ENCODE measurements at regions of chrX and their contacts with region 1.

Region 1: GRCh38 chrX:101799387-101799786 is 132.4 kb downstream of the ZMAT1 start:
- DNase-seq: peak; percentile 80
- ATAC-seq: peak; percentile 100

Region 2: DNA sequence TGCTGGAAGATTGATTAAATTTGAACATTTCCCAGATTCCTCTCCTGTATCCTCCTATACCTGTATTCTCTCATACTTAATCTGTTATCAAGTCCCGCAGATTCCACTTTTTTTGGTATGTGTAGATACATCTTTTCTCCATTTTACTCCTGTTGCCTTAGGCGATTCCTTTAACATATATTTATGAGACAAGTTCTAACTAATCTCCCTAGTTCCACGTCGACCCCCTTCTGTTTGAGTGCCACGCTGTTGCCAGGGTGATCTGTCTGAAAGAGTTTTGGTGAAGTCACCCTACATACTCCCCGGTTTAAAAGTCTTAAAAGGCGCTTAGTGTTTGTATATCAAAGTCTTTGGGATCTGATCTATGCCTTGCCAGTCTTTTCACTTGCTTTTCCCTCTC is 388.9 kb before region 1 on chrX:
- intact Hi-C with region 1: loop called (anchors 5 kb)
- DNase-seq: no peak
- ATAC-seq: no peak

Region 3: DNA sequence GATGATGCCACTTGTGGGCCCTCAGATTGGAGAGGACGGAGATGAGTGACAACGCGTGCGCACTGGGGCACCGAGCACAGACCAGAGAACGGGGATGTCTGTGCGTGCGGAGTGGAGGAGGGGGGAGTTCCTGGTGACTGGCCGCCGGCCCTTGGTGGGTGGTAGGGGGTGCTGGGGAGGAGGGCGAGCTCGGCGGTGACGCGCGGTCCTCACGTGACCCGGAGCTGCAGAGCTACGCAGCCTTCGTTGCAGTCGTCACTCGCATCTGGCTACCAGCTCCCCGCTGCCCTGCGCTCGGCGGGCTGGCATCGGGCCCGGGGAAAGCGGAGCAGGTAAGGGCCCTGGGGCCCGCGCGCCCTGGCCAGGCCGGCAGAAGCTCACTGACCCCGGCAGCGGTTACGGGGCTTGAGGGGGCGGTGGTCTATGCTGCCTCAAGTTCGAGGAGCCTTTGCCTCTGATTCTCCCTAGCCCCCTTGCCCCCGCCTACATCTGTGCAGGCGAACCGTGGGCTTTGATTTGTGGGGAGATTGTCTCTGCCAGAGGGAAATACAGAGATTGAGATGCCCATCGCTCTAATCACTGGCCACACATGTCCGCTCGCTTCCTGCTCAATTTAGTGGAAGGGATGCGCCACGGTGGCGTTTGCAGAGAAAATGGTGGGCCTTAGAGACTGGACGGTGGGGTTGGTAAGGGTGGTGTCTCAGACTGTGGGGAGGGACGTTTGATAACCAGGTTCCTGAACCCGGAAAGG is 314.0 kb before region 1 on chrX and contains the start of gene ARMCX4:
- intact Hi-C with region 1: no loop called
- DNase-seq: peak; percentile 59
- ATAC-seq: peak; percentile 88
- total RNA-seq, gene ARMCX4: 5.5 TPM

Region 4: GRCh38 chrX:101595739-101596419 is 203.5 kb before region 1 on chrX:
- intact Hi-C with region 1: loop called (anchors 5 kb)
- DNase-seq: no peak
- ATAC-seq: peak; percentile 63

Region 5: DNA sequence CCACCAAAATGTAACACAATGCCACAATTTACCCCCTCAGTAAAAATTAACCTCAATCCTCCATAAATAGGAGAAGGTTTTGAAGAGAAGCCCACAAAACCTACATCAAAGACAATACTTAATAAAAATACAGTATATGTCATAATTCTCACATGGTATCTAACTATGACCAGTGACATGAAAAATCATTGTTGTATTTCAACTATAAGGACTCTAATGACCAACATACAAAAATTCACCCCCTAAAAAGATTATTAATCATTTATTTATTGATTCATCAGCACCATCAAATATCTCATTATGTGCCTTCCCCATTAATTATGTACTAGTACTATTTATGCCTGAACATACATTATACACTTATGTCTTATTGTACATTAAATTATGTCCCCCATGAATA is 209.5 kb after region 1 on chrX:
- intact Hi-C with region 1: no loop called
- DNase-seq: no peak
- ATAC-seq: no peak

Measured in left ventricle myocardium superior (tissue), 1 donor.